Esophagus muscularis mucosa (tissue), 4 donors: ENCODE measurements at regions of chr19 and their contacts with region 1.

Region 1: DNA sequence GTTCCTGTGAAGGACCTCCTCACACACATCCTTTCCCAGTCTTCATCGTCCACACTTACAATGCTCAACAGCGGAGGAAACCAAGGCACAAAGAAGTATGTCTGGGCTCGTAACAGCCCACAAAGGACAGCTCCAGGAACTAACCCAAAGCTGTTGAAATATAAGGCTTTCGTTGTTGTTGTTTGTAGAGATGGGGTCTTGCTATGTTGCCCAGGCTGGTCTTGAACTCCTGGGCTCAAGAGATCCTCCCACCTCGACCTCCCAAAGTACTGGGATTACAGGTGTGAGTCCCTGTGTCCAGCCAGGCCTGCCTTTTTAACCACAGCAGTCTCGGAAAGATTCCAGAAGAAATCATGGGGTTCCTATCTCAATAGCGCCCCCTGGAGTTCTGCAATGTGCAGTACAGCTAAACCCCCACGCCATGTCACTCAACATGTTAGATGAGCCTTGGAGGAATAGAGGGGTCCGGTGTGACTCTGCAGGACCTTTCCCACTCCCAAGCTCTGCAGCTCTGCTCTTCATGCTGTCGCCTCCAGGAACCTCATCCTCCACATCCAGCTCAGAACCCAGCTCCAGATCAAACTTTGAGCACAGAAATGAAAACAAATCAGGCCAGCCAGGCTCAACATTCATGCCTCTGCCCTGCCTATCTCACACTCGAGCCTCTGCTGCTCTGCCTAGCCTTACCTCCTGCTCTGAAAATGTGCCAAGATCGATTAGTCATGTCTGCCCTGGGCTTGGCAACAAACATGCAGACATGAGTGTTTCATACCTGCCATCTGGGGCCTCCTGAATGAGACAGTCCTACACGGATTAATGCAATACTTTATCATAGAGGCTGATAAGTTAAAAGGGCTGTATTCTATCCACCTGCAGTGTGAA is 7.5 kb downstream of the PLA2G4C start:
- DNase-seq: no peak
- H3K4me3 ChIP-seq: no peak overlapping the region
- H3K27ac ChIP-seq: no peak overlapping the region
- H3K4me1 ChIP-seq: peaks cover 6 to 14% (median 13%) of the 10 kb centered on the region in 4 donors
- H3K27me3 ChIP-seq: no peaks in the 10 kb centered on the region
- CTCF ChIP-seq: peak in 2 of 3 experiments; percentile 39 to 65
- EP300 ChIP-seq: no peak
- POLR2A ChIP-seq: no peak

Region 2: DNA sequence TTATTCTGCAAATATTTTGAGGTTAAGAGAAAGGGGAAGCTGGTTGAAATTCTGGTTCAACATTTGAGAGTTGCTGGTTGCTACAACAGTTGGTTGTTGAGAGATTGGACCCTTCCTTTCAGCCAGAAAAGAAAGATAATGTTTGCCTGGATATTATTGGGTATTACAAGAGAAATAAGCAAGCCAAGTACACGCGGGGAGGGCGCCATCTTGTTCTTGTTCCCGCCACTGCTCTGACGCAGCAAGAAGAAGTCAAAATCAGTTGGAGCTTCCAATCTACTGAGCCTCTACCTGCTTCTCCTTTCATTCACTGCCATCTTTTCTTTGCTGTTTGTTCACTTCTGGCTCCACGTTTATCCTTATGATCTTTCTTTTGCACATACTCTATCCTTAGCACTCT is 129.6 kb before region 1 on chr19:
- intact Hi-C with region 1: loop called (anchors 10 kb)
- DNase-seq: peak; percentile 37
- H3K4me3 ChIP-seq: no peak overlapping the region
- H3K27ac ChIP-seq: no peak overlapping the region
- H3K4me1 ChIP-seq: no peaks in the 10 kb centered on the region
- H3K27me3 ChIP-seq: peaks cover 0 to 45% (median 0%) of the 10 kb centered on the region in 4 donors
- CTCF ChIP-seq: no peak
- EP300 ChIP-seq: no peak
- POLR2A ChIP-seq: no peak